ENCODE measurements at regions of chr12 and their contacts with region 1.

Region 1: DNA sequence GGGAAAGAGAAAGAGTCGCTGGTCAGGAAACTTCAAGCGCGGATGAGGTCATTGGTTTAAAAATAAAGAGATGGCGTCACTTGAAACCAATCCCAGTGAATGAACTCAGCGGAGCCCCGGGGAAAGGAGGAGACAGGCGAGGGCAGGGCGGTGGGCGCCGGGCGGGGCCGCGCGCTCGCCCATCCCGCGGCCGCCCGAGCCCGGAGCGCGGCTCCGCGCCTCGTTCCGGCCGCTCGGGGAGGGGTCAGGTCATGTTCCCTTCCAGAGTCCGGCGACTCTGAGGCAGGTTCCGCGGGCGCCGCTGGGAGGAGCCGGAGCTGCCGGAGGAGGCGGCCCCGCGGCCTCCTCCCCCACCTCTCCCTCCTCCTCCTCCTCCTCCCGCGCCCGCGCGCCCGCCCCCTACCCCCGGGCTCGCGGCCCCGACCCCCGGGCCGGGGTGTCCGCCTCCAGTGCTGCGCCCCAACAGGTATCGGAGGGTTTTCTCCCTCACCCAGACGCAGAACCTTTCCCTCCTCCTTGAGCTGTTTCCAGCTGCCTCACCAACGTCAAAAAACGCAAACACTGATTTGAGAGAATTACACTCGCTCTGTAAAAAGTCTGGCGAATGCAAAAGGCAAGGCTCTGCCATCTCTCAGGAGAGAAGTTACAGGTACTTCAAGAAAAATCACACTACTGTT is at the start of gene DUSP16:
- H3K4me3 Mint-ChIP-seq: peak within 1 kb of the TSS; percentile 79
- H3K27ac Mint-ChIP-seq: peak within 1 kb of the TSS; percentile 87
- H3K4me1 Mint-ChIP-seq: peaks cover 36% of the 10 kb centered on the region
- H3K27me3 Mint-ChIP-seq: no peaks in the 10 kb centered on the region

Region 2: GRCh38 chr12:12376646-12377448 is 185.9 kb before region 1 on chr12:
- intact Hi-C with region 1: loop called (anchors 2 kb)
- H3K4me3 Mint-ChIP-seq: no peak overlapping the region
- H3K27ac Mint-ChIP-seq: no peak overlapping the region
- H3K4me1 Mint-ChIP-seq: peaks cover 36% of the 10 kb centered on the region
- H3K27me3 Mint-ChIP-seq: no peaks in the 10 kb centered on the region

Region 3: DNA sequence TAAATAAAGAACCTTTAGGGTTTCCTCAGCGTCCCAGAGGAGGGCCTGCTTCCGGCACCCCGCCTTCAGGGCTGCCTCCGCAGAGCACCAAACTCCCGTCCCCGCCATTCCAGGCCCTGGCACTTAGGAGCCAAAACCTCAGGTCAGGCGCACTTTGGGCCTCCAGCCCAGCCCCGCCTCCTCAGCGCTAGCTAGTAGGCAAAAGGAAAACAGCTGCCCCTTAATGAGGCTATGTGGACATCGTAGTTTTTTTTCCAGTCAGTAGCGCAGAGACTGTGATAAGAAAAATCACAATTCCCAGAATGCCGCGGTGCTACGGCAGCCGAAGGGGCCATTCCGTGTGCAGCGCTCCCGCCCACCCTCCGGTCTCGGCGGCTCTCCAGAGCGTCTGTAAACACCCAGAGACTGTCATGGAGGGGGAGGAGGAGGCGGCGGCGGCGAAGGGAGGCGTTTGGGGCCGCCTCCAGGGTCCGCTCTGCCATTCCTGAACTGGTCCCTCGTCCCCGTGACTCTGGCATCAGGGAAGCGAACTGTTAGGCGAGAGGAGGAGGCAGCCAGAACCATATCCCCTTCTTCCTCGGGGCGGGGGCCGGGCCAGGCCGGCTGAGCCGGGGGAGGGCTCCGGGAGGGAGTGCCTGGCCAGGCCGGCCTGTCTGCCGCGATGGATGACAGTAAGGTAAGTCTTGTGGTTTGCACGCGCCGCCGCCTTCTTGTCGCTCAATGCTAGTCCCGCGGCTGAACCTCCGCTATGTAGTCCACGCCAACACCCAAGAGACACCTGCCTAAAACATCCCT is 49.0 kb after region 1 on chr12 and contains the start of gene CREBL2:
- intact Hi-C with region 1: loop called (anchors 5 kb)
- H3K4me3 Mint-ChIP-seq: peak within 1 kb of the TSS; percentile 95
- H3K27ac Mint-ChIP-seq: peak within 1 kb of the TSS; percentile 98
- H3K4me1 Mint-ChIP-seq: peaks cover 71% of the 10 kb centered on the region
- H3K27me3 Mint-ChIP-seq: no peaks in the 10 kb centered on the region

Region 4: DNA sequence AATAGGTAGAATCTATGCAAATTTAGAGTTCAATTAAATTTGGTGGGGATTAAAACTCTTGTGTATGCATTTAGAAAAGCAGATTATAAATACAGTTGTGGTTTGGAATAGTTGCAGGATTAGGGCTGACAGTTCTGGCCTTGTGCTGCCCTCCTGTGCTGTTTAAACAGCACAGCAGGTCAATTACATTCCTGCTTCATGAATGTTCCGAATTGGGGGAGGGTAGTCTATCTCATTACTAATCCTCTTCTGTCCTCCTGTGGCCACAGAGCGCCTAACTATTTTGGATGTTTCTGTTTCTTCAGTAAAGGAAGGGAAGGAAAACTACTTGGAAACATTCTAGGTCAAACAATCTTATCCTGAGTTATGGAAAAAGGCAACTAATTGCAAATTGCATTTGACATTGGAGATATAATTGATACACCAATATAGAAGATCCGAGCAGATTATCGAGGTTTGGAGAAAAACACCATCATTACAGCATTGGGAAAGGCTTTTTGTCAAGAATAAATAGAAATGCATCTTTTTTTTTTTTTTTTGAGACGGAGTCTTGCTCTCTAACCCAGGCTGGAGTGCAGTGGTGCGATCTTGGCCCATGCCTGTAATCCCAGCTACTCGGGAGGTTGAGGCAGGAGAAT is 142.0 kb after region 1 on chr12:
- intact Hi-C with region 1: loop called (anchors 5 kb)
- H3K4me3 Mint-ChIP-seq: no peak overlapping the region
- H3K27ac Mint-ChIP-seq: no peak overlapping the region
- H3K4me1 Mint-ChIP-seq: peaks cover 13% of the 10 kb centered on the region
- H3K27me3 Mint-ChIP-seq: no peaks in the 10 kb centered on the region

Measured in dendritic cell treated with granulocyte-macrophage colony-stimulating factor and Interleukin-4, amounts not matched to agents 40 ng/mL and 50 ng/mL, for 4 days (primary cell).